PC-9 (cell line): ENCODE measurements at regions of chr11 and their contacts with region 1.

Region 1: DNA sequence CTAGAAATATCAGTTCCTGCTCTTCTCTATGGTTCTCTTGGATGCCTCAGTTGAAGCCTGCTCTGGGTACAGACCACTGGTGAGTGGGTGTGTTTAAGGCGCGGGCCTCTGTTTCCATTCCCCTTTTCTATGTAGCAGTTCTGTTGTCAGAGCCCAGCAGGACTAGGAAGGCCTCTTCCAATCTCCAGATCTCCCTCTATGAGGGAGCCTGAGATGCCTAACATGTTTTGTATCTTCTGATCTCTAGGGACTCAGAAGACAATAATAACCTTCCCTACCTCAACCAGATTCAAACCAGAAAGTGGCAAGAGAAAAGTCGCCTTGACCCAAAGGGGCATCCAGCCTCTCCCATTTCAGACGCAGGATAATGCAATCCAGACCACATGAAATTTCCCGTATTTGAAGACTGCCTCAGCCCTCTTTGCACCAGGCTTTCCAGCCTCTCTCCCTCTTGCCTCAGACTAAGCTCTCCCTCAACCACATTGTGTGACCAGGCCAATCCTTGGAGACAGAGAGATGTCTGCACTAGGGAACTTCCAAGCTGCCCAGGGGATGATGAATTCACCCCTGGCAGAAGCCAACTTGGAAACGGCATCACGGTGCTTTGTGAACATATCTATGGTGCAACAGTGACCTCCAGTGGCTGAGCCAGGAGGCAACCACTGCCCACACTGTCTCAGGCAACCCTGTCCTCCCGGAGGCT is 150.1 kb upstream of the UBASH3B start:
- DNase-seq: peak; percentile 43 to 66
- H3K4me3 ChIP-seq: no peak overlapping the region
- H3K27ac ChIP-seq: no peak overlapping the region
- H3K4me1 ChIP-seq: no peaks in the 10 kb centered on the region
- H3K27me3 ChIP-seq: no peaks in the 10 kb centered on the region
- CTCF ChIP-seq: peak; percentile 92

Region 2: GRCh38 chr11:121249039-121249663 is 1256.3 kb before region 1 on chr11:
- CTCF ChIA-PET with region 1: interaction called, 5 read pairs
- POLR2A ChIA-PET with region 1: no interaction called
- intact Hi-C with region 1: loop called (anchors 10 kb)
- DNase-seq: peak in 1 of 2 experiments; percentile 59
- H3K4me3 ChIP-seq: no peak overlapping the region
- H3K27ac ChIP-seq: no peak overlapping the region
- H3K4me1 ChIP-seq: peaks cover 7% of the 10 kb centered on the region; the same call in 1 of the 2 replicates
- H3K27me3 ChIP-seq: peaks cover 5% of the 10 kb centered on the region
- CTCF ChIP-seq: peak; percentile 85

Region 3: DNA sequence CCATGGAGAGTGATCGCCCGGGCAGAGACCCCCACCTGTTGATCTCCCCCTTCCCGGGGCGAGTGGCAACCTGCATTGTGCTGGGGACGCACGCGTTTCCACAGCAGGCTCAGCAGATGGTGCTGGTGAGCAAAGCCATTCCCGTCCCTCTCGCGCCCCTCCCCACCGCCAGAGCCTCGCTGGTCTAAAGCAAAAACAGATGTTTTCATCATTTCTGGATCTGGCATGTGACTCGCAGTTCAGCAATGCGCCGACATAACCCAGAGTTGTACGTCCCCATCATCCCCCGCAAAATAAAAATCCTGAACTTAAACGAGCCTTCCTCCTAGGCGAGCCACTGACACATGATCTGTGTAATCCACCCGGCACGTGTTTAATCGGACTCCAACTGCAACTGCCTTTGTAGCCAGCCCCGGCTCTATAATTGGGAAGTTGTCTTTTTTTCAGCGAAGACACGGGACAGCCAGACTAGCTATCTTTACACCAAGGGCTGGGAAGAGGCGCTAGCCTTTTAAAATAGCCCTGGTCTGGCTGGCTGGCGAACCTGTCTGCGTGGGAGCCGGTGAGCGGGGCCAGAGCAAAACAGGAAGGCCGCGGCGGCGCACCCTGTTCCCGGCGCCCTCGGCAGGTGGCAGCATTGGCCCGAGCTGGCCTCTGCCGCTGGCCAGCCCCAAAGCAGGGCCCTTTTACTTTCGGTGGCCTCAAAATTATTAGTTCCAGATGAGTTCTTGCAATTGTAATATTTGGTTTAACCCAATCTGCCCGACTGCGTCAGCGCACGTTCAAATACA is 849.7 kb before region 1 on chr11:
- CTCF ChIA-PET with region 1: no interaction called
- POLR2A ChIA-PET with region 1: no interaction called
- intact Hi-C with region 1: loop called (anchors 1 kb)
- DNase-seq: peak; percentile 58 to 81
- H3K4me3 ChIP-seq: peak overlapping the region; percentile 60
- H3K27ac ChIP-seq: peak overlapping the region; percentile 52
- H3K4me1 ChIP-seq: peaks cover 11% of the 10 kb centered on the region; the same call in 1 of the 2 replicates
- H3K27me3 ChIP-seq: no peaks in the 10 kb centered on the region
- CTCF ChIP-seq: peak; percentile 94

Region 4: DNA sequence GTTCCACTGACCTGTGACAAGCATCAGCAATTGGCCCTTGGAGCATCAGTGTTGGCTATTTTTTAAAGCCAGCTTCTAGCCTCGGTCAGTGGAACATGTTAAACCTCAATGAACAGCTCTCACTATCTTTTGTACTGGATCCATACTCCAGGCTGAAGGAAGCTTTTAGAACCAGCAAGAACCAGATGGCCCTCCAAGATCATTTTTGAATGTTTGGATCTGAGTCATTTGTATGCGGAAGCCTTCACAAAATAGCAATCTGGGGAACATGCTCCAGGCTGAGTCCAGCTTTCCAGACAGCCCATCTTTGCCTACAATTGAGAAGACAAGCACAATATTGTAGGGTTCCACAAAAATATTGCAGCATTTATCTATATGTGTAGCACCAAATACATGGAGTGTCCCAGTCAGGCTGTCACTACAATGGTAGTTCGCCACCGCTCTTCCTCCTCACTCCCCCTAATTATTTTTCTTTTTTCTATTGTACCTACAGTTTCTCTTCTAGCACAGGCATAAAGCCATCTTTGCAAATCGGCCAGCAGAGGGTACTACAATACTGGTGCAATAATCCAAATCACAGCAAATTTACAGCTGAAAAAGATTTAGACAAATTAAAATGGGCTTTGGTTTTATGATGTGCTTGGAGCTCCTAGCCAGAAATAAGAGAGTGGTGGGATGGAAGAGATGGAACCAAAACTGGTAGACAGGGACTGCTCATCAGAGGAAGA is 212.0 kb before region 1 on chr11:
- CTCF ChIA-PET with region 1: interaction called, 12 read pairs
- POLR2A ChIA-PET with region 1: no interaction called
- intact Hi-C with region 1: no loop called
- DNase-seq: no peak
- H3K4me3 ChIP-seq: no peak overlapping the region
- H3K27ac ChIP-seq: no peak overlapping the region
- H3K4me1 ChIP-seq: no peaks in the 10 kb centered on the region
- H3K27me3 ChIP-seq: no peaks in the 10 kb centered on the region
- CTCF ChIP-seq: peak; percentile 50

Region 5: GRCh38 chr11:123046473-123047259 is 541.2 kb after region 1 on chr11:
- CTCF ChIA-PET with region 1: interaction called, 16 read pairs
- POLR2A ChIA-PET with region 1: no interaction called
- intact Hi-C with region 1: no loop called
- DNase-seq: no peak
- H3K4me3 ChIP-seq: no peak overlapping the region
- H3K27ac ChIP-seq: no peak overlapping the region
- H3K4me1 ChIP-seq: no peaks in the 10 kb centered on the region
- H3K27me3 ChIP-seq: no peaks in the 10 kb centered on the region
- CTCF ChIP-seq: no peak